Activated T-helper 1 cell treated with anti-CD3 and anti-CD28 coated beads, Interleukin-12 subunit alpha, Interleukin-12 subunit beta, Interleukin-2, Interleukin-4 antibody, amounts not matched to agents 30 ng/mL and 10 ng/mL and 1 ng/mL, durations not matched to agents 14 hours and 24 hours and 36 hours (primary cell): ENCODE measurements at regions of chr3 and their contacts with region 1.

Region 1: GRCh38 chr3:143535994-143536784 is 312.1 kb downstream of the SLC9A9 start:
- DNase-seq: no peak
- H3K4me3 Mint-ChIP-seq: no peak overlapping the region
- H3K27ac Mint-ChIP-seq: no peak overlapping the region
- H3K4me1 Mint-ChIP-seq: peaks cover 14% of the 10 kb centered on the region
- H3K27me3 Mint-ChIP-seq: peaks cover 2% of the 10 kb centered on the region

Region 2: GRCh38 chr3:143103652-143104051 is 432.5 kb before region 1 on chr3:
- intact Hi-C with region 1: no loop called
- DNase-seq: no peak
- H3K4me3 Mint-ChIP-seq: no peak overlapping the region
- H3K27ac Mint-ChIP-seq: no peak overlapping the region
- H3K4me1 Mint-ChIP-seq: peaks cover 8% of the 10 kb centered on the region
- H3K27me3 Mint-ChIP-seq: peaks cover 4% of the 10 kb centered on the region

Region 3: DNA sequence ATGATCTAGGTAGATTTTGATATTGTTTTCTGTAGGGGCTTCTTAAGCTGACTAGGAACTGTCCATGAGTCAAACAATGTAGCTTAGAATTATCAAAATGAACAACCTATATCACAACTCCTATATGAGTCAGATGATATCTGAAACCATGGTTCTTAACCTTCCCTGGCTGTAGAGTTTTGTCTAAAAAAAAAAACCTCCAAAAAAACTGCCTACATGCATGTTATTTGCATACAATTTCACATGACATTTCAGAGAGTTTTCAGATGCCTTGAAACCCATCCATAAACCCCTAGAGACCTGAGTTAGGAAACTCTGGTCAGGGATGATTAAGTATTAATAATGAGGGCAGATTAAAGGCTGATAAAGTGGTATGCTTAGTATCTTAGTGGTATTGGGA is 259.6 kb before region 1 on chr3:
- intact Hi-C with region 1: loop called (anchors 5 kb)
- DNase-seq: no peak
- H3K4me3 Mint-ChIP-seq: no peak overlapping the region
- H3K27ac Mint-ChIP-seq: no peak overlapping the region
- H3K4me1 Mint-ChIP-seq: peaks cover 11% of the 10 kb centered on the region
- H3K27me3 Mint-ChIP-seq: no peaks in the 10 kb centered on the region

Region 4: GRCh38 chr3:143585720-143586456 is 49.7 kb after region 1 on chr3:
- intact Hi-C with region 1: loop called (anchors 1 kb)
- DNase-seq: no peak
- H3K4me3 Mint-ChIP-seq: no peak overlapping the region
- H3K27ac Mint-ChIP-seq: peak overlapping the region; percentile 20
- H3K4me1 Mint-ChIP-seq: peaks cover 21% of the 10 kb centered on the region
- H3K27me3 Mint-ChIP-seq: no peaks in the 10 kb centered on the region

Region 5: GRCh38 chr3:143674100-143674968 is 138.1 kb after region 1 on chr3:
- intact Hi-C with region 1: loop called (anchors 5 kb)
- DNase-seq: peak; percentile 64
- H3K4me3 Mint-ChIP-seq: no peak overlapping the region
- H3K27ac Mint-ChIP-seq: peak overlapping the region; percentile 11
- H3K4me1 Mint-ChIP-seq: peaks cover 7% of the 10 kb centered on the region
- H3K27me3 Mint-ChIP-seq: no peaks in the 10 kb centered on the region